GM12878 (cell line): ENCODE measurements at regions of chr14 and their contacts with region 1.

Region 1: DNA sequence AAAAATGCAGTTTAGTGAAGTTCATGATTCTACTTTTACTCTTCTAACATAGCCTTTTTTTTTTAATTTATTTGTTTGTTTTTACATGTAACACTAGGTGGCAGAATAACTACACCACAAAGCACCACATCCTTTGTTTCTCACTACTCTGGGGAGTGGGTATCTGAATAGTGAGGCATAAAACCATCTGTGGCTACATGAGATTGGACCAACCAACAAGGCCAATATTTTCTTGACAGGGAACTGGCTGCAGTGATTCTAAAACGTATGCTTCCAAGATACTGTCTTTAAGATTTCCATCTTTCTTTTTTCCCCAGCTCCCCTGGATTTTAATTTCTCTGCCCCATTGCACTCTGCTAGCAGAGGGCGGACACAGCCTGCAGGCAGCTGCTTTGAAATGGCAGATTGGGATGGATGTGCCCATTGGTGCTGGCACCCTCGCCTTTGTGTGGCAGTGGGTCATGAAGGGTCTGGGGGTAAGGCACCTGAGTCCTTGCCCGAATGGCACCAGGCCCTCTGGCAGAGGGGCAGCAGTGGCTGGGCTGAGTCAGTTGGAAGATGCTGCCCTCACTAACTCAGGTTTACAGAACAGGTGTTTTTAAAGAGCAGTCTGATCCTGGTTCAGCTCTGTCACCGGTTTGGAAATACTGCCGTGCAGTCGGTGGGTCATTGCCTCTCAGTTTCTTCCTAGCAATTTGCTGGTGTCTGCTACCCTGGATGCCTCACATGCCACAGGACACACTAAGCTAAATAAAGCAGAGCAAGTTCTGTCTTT is 429.1 kb downstream of the RAD51B start:
- DNase-seq: peak; percentile 89
- ATAC-seq: peak; percentile 84
- H3K4me3 ChIP-seq: no peak overlapping the region
- H3K27ac ChIP-seq: peak overlapping the region; percentile 60
- H3K4me1 ChIP-seq: peaks cover 41% of the 10 kb centered on the region
- H3K27me3 ChIP-seq: no peaks in the 10 kb centered on the region
- CTCF ChIP-seq: peak; percentile 33 to 73 (median 45); a peak in 4 of 6 replicates
- EP300 ChIP-seq: no peak
- POLR2A ChIP-seq: no peak
- RAD21 ChIP-seq: peak; percentile 93

Region 2: DNA sequence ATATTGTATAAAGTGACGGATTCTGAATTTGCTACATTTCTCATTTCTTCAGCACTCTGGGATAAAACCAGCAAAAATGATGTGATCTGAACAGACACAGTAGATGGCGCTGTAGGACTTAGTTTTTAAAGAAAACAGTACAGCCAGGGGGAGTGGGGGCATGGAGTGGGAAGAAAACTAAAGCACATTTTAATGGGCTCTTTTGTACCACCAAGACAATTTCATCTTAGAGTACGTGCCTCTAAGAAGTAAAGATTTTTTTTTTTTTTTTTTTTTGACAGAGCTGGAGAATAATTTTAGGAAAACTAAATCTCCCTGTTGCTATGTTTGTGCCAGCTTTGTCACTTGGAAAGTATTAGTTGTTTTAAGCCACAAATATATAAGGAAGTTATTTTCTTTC is 304.7 kb before region 1 on chr14:
- CTCF ChIA-PET with region 1: interaction called, 110 read pairs
- POLR2A ChIA-PET with region 1: interaction called, 4 read pairs
- RAD21 ChIA-PET with region 1: interaction called, 93 read pairs
- SMC1A ChIA-PET with region 1: interaction called, 90 read pairs
- in situ Hi-C with region 1: loop called (anchors 5 kb)
- intact Hi-C with region 1: loop called (anchors 1 kb)
- DNase-seq: peak; percentile 49
- ATAC-seq: peak; percentile 89
- H3K4me3 ChIP-seq: no peak overlapping the region
- H3K27ac ChIP-seq: no peak overlapping the region
- H3K4me1 ChIP-seq: no peaks in the 10 kb centered on the region
- H3K27me3 ChIP-seq: no peaks in the 10 kb centered on the region
- CTCF ChIP-seq: peak; percentile 50 to 78 (median 68); a peak in 5 of 6 replicates
- EP300 ChIP-seq: no peak
- POLR2A ChIP-seq: no peak
- RAD21 ChIP-seq: peak; percentile 94

Region 3: GRCh38 chr14:68268197-68268596 is 19.5 kb after region 1 on chr14:
- CTCF ChIA-PET with region 1: interaction called, 158 read pairs
- POLR2A ChIA-PET with region 1: interaction called, 10 read pairs
- RAD21 ChIA-PET with region 1: interaction called, 139 read pairs
- SMC1A ChIA-PET with region 1: interaction called, 237 read pairs
- in situ Hi-C with region 1: no loop called
- intact Hi-C with region 1: no loop called
- DNase-seq: peak; percentile 93
- ATAC-seq: peak; percentile 84
- H3K4me3 ChIP-seq: no peak overlapping the region
- H3K27ac ChIP-seq: peak overlapping the region; percentile 84
- H3K4me1 ChIP-seq: peaks cover 73% of the 10 kb centered on the region
- H3K27me3 ChIP-seq: no peaks in the 10 kb centered on the region
- CTCF ChIP-seq: no peak
- EP300 ChIP-seq: peak; percentile 93 to 100; a peak in 3 of 4 replicates
- POLR2A ChIP-seq: no peak
- RAD21 ChIP-seq: peak; percentile 22

Region 4: DNA sequence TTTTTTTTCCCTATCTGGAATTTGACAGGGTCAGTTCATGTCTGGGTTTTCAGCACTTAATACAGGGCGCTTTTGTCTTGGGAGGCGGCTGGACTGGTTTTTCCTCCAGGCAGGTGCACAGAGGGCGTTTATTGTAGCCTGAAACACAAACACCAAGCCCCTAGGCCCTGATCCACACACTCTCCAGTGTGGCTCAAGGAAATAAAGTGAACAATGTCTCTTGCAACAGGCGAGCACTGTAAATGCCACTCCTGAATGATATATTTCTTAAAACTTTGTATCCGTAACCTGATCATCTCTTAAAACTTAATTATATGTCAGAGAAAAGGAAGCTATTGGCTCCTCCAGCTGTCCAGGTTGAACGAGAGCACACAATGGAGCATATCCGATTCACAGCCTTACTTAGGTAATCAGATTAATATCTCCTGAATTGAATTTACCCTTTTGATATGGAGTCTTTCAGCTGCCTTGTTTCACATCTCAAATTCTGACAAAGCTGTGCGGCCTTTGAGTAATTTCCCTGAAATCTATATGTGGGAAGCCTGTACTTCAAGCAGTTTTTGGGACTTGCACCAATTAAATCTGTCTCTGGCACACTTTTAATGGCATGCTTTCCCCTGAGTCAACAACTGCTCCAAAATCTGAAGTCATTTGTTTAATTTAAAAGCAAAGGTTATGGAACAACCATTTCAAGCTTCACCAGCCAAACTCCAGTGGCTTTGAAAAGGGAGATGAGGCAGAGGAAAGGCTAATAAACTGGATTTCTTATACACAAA is 58.5 kb after region 1 on chr14:
- CTCF ChIA-PET with region 1: interaction called, 21 read pairs
- POLR2A ChIA-PET with region 1: interaction called, 8 read pairs
- RAD21 ChIA-PET with region 1: interaction called, 87 read pairs
- SMC1A ChIA-PET with region 1: interaction called, 122 read pairs
- in situ Hi-C with region 1: no loop called
- intact Hi-C with region 1: loop called (anchors 2 kb)
- DNase-seq: no peak
- ATAC-seq: no peak
- H3K4me3 ChIP-seq: no peak overlapping the region; the same call in 1 of the 2 replicates
- H3K27ac ChIP-seq: peak overlapping the region; percentile 98
- H3K4me1 ChIP-seq: peaks cover 53% of the 10 kb centered on the region
- H3K27me3 ChIP-seq: no peaks in the 10 kb centered on the region
- CTCF ChIP-seq: no peak
- EP300 ChIP-seq: no peak
- POLR2A ChIP-seq: no peak
- RAD21 ChIP-seq: no peak

Region 5: GRCh38 chr14:68408680-68409079 is 160.0 kb after region 1 on chr14:
- CTCF ChIA-PET with region 1: interaction called, 143 read pairs
- POLR2A ChIA-PET with region 1: interaction called, 5 read pairs
- RAD21 ChIA-PET with region 1: interaction called, 208 read pairs
- SMC1A ChIA-PET with region 1: interaction called, 251 read pairs
- in situ Hi-C with region 1: no loop called
- intact Hi-C with region 1: no loop called
- DNase-seq: no peak
- ATAC-seq: peak; percentile 42
- H3K4me3 ChIP-seq: no peak overlapping the region
- H3K27ac ChIP-seq: no peak overlapping the region
- H3K4me1 ChIP-seq: peaks cover 39% of the 10 kb centered on the region
- H3K27me3 ChIP-seq: no peaks in the 10 kb centered on the region
- CTCF ChIP-seq: peak; percentile 25 to 54 (median 33); a peak in 5 of 6 replicates
- EP300 ChIP-seq: no peak
- POLR2A ChIP-seq: no peak
- RAD21 ChIP-seq: peak; percentile 67

Region 6: DNA sequence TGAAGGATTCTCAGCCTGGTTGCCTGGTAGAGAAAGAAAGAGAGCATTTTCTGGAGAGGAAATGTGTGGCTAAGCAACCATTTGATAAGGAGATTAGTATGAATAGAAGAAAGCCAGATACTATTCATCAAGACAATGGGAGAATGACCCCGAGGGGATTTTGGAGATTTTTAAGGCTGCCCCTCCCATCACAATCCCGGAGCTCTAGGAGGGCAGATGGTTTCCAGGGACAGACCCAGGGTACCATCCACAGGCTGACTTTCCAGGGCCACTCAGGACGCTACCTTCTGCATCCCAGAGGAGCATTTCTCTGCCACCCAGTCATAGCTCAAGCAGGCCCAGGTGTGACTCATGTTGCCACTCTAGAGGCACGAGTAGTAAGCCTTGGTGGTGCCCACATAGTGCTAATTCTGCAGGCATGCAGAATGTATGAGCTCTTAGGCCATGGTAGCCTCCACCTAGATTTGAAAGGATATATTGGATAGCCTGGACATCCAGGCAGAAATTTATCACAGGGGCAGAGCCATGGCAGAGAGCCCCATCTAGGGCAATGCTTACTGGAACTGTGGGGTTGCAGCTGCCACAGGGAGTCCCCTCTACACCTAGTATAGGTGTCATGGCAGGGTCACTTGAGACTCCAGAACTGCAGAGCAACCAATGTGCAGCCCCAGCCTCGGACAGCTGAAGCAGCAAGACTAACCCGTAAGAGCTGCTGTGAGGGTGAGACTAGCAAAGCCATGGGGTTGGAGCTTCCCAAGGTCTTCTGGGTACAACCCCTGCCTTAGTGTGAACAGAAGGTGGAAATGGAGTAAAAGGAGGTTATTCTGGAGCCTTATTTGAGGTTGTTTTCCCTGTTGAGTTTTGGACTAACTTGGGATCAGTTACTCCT is 178.2 kb after region 1 on chr14:
- CTCF ChIA-PET with region 1: no interaction called
- POLR2A ChIA-PET with region 1: no interaction called
- RAD21 ChIA-PET with region 1: no interaction called
- SMC1A ChIA-PET with region 1: no interaction called
- in situ Hi-C with region 1: no loop called
- intact Hi-C with region 1: no loop called
- DNase-seq: no peak
- ATAC-seq: no peak
- H3K4me3 ChIP-seq: no peak overlapping the region
- H3K27ac ChIP-seq: no peak overlapping the region
- H3K4me1 ChIP-seq: no peaks in the 10 kb centered on the region
- H3K27me3 ChIP-seq: no peaks in the 10 kb centered on the region
- CTCF ChIP-seq: no peak
- EP300 ChIP-seq: no peak
- POLR2A ChIP-seq: no peak
- RAD21 ChIP-seq: no peak

Region 7: GRCh38 chr14:68788996-68789820 is 540.5 kb after region 1 on chr14:
- CTCF ChIA-PET with region 1: interaction called, 75 read pairs
- POLR2A ChIA-PET with region 1: interaction called, 4 read pairs
- RAD21 ChIA-PET with region 1: interaction called, 139 read pairs
- SMC1A ChIA-PET with region 1: interaction called, 128 read pairs
- in situ Hi-C with region 1: loop called (anchors 5 kb)
- intact Hi-C with region 1: loop called (anchors 1 kb)
- DNase-seq: no peak
- ATAC-seq: peak; percentile 39
- H3K4me3 ChIP-seq: peak overlapping the region; percentile 97
- H3K27ac ChIP-seq: peak overlapping the region; percentile 100
- H3K4me1 ChIP-seq: peaks cover 32% of the 10 kb centered on the region
- H3K27me3 ChIP-seq: no peaks in the 10 kb centered on the region
- CTCF ChIP-seq: peak; percentile 76 to 93 (median 85); a peak in 5 of 6 replicates
- EP300 ChIP-seq: no peak
- POLR2A ChIP-seq: peak; percentile 77
- RAD21 ChIP-seq: peak; percentile 80

Region 8: GRCh38 chr14:69090187-69090789 is 841.6 kb after region 1 on chr14:
- CTCF ChIA-PET with region 1: no interaction called
- POLR2A ChIA-PET with region 1: no interaction called
- RAD21 ChIA-PET with region 1: no interaction called
- SMC1A ChIA-PET with region 1: no interaction called
- in situ Hi-C with region 1: no loop called
- intact Hi-C with region 1: loop called (anchors 10 kb)
- DNase-seq: no peak
- ATAC-seq: peak; percentile 82
- H3K4me3 ChIP-seq: no peak overlapping the region
- H3K27ac ChIP-seq: no peak overlapping the region
- H3K4me1 ChIP-seq: peaks cover 4% of the 10 kb centered on the region
- H3K27me3 ChIP-seq: no peaks in the 10 kb centered on the region
- CTCF ChIP-seq: peak; percentile 50 to 65 (median 56)
- EP300 ChIP-seq: no peak
- POLR2A ChIP-seq: no peak
- RAD21 ChIP-seq: peak; percentile 58